ENCODE measurements at regions of chr1 and their contacts with region 1.

Region 1: GRCh38 chr1:54397090-54397591 is 9.1 kb downstream of the SSBP3 start:
- DNase-seq: no peak
- ATAC-seq: no peak
- H3K4me3 ChIP-seq: no peak overlapping the region
- H3K4me3 Mint-ChIP-seq: no peak overlapping the region
- H3K27ac ChIP-seq: no peak overlapping the region
- H3K27ac Mint-ChIP-seq: no peak overlapping the region
- H3K4me1 ChIP-seq: peaks cover 29% of the 10 kb centered on the region
- H3K4me1 Mint-ChIP-seq: peaks cover 64% of the 10 kb centered on the region
- H3K27me3 ChIP-seq: no peaks in the 10 kb centered on the region
- H3K27me3 Mint-ChIP-seq: no peaks in the 10 kb centered on the region
- CTCF ChIP-seq: no peak

Region 2: DNA sequence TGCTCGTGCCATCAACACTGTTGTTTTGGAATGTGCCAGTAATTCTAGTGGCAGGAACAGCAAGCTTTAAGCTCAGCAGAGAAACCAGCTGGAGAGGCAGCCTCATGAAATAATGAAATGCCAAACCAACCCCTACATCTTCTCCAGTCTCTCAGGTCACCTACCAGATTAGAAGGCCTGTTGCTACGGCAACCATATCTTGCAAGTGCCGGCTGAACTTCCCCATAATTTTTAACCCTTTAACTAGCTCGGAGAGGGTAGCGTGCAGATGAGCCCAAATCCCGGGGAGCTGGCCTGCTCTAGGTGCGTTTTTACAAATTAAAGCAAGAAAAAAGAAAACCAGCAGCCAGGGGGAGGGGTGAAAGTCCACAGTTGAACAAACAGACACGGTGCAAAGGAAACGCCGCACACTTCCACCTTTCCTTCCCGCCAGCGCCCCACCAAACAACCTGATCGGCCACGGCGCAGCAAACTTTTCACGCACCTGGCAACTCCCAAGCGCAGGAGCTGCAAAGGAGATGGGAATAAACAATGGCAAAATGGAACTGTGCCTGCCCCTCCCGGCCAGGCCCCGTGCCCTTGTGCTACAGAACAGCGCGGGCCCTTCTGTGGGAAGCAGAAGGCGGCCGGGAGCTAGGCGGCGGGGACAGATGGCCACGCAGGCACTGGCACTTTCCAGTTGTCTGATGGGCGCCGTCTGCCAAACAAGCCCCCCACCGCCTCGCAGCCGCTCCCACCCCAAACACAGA is 41.0 kb before region 1 on chr1:
- CTCF ChIA-PET with region 1: interaction called, 3 read pairs
- POLR2A ChIA-PET with region 1: no interaction called
- intact Hi-C with region 1: loop called in 1 of 2 experiments (anchors 2 kb)
- DNase-seq: peak in 2 of 9 experiments; percentile 29 to 54
- ATAC-seq: peak; percentile 3
- H3K4me3 ChIP-seq: peak overlapping the region; percentile 36 to 64
- H3K4me3 Mint-ChIP-seq: peak overlapping the region; percentile 86
- H3K27ac ChIP-seq: peak overlapping the region; percentile 18 to 41
- H3K27ac Mint-ChIP-seq: peak overlapping the region; percentile 92
- H3K4me1 ChIP-seq: peaks cover 53% of the 10 kb centered on the region
- H3K4me1 Mint-ChIP-seq: peaks cover 88% of the 10 kb centered on the region
- H3K27me3 ChIP-seq: no peaks in the 10 kb centered on the region
- H3K27me3 Mint-ChIP-seq: no peaks in the 10 kb centered on the region
- CTCF ChIP-seq: no peak

Measured in CD8-positive, alpha-beta T cell (primary cell).